ENCODE measurements at regions of chr1 and their contacts with region 1.

Region 1: DNA sequence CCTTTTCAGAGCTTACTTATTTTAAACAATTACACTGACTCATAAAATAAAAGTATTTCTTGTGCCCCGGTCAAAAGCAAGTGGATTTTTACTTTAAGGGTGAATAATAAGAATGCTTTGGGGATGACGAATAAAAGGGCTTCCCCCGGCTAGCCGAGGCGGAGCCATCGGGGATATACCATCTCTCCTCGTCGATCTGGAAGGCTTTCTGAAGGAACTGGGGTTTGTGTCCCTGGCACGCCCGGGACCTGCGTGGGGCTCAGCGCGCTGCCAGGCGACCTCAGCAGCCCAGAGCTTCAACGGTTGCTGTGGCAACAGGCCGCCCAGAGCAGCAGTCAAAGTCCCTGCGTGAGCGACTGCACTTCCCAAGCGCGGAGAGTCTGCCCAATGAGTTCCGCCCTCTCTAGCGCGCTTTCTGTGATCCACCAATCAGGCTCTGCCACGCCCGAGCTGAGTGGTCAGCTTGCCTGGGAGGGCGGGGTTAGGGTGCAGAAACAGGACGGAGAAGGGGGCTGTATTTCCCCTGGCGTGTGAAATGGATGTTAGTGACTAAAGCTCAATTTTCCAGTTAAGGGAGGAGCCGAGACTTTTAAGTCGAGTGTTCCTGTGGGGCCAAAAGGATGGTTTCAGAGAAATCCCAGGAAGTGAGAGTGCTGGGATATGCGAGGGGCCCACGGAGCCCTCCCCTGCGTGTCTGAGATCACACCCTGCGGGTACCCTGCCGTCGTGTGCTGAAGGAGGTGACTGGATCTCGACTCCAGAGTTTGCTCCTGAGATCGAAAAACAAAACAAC is 33.0 kb upstream of the MGST3 start:
- DNase-seq: peak; percentile 95
- ATAC-seq: peak; percentile 99
- H3K4me3 Mint-ChIP-seq: peak overlapping the region; percentile 90
- H3K27ac Mint-ChIP-seq: peak overlapping the region; percentile 90
- H3K4me1 Mint-ChIP-seq: peaks cover 19% of the 10 kb centered on the region
- H3K27me3 Mint-ChIP-seq: peaks cover 30% of the 10 kb centered on the region

Region 2: DNA sequence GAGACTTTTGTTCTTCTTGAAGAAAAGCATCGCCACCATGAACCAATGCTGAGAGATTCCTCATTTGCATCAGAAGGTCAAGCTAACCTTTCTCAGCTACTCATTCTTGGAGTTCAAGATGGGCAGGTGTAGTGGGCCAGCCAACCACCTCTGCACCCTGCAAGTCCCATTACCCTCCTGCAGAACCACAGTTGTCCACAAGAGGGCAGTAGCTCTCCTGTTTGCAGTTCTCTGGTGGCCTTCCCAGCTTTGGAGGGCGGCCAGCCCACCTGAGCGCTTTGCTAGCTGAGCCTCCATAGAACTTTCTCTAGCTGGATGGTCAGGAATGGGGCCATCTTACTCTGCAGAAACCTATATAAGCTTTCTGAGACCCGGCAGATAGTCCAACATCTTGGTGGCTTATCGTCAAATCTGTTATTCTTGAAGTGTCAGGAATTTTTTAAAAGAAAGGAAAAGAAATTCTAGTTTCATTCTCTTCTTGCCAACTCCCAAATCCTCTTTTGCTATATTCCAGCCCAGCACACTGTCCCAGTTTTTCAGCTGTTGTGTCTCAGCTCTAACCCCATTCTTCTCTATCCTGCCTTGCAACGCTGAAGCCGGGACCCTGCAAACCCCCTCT is 230.6 kb before region 1 on chr1:
- CTCF ChIA-PET with region 1: interaction called, 85 read pairs
- POLR2A ChIA-PET with region 1: no interaction called
- DNase-seq: peak; percentile 83
- ATAC-seq: peak; percentile 74
- H3K4me3 Mint-ChIP-seq: no peak overlapping the region
- H3K27ac Mint-ChIP-seq: no peak overlapping the region
- H3K4me1 Mint-ChIP-seq: peaks cover 2% of the 10 kb centered on the region
- H3K27me3 Mint-ChIP-seq: peaks cover 38% of the 10 kb centered on the region

Region 3: DNA sequence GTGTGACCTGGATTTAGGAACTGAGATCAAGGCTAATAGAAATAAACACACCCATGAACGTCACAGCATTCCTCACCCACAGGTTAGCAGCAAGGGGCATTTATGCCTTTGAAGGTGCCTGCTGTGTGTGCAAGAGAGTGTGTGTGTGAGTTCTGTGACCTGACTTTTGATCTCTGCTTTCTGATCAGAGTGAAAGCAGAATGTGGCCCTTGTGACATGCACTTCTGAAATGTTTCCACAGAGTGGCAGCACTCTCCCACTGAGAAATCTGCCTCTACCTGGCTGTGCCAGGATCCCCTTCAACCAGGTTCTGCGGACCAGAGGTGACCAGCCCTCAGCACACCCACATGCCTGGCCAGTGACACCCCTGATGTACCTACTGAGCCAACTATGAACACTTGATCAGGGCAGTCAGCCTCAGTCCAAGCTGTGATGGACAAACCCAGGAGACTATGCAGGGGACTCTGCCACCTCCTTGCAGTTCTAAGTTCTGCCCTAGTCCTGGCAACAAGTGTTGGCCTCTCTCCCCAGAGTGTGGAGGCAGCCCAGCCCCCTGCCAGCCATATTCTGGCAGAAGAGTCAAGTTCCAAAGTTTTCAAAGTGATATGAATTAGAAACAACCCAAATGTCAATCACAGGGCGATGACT is 194.1 kb before region 1 on chr1:
- CTCF ChIA-PET with region 1: interaction called, 32 read pairs
- POLR2A ChIA-PET with region 1: no interaction called
- DNase-seq: peak; percentile 47
- ATAC-seq: peak; percentile 47
- H3K4me3 Mint-ChIP-seq: no peak overlapping the region
- H3K27ac Mint-ChIP-seq: no peak overlapping the region
- H3K4me1 Mint-ChIP-seq: peaks cover 2% of the 10 kb centered on the region
- H3K27me3 Mint-ChIP-seq: peaks cover 25% of the 10 kb centered on the region

Region 4: DNA sequence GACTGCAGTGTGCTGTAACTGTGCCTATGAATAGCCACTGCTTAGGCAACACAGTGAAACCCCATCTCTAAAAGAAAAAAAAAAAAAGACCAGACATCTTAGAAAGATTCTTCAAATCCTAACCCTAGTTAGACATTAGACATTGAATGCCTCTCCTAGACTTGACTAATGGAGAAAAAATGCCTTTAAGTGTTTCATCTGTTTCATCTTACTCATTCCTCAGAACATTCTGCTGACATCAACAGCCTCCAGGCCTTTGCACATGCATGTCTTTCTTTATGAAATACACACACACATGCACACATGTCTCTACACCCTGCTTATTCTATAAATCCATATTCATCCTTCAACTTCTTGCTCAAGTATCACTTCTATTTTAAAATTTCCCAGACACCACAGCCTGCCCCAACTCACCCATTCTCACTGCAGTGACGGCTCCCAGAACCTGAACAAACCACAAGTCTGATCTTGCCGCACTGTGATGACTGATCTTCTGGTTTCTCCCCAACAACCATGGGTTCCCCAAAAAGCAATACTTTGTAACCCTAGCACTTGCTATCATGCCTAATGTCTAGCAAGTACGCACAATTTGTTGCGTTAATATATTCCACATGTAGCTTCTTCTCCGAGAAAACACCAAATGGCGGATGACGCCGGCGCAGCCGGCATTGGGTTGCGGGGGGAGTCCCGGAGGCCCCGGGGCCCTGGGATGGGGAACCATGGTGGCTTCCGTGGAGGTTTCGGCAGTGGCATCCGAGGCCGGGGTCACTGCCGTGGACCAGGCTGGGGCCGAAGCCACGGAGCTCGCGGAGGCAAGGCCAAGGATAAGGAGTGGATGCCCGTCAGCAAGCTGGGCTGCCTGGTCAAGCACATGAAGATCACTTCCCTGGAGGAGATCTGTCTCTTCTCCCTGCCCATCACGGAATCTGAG is 16.9 kb before region 1 on chr1:
- CTCF ChIA-PET with region 1: interaction called, 12 read pairs
- POLR2A ChIA-PET with region 1: no interaction called
- DNase-seq: no peak
- ATAC-seq: no peak
- H3K4me3 Mint-ChIP-seq: no peak overlapping the region
- H3K27ac Mint-ChIP-seq: no peak overlapping the region
- H3K4me1 Mint-ChIP-seq: no peaks in the 10 kb centered on the region
- H3K27me3 Mint-ChIP-seq: peaks cover 23% of the 10 kb centered on the region

Region 5: DNA sequence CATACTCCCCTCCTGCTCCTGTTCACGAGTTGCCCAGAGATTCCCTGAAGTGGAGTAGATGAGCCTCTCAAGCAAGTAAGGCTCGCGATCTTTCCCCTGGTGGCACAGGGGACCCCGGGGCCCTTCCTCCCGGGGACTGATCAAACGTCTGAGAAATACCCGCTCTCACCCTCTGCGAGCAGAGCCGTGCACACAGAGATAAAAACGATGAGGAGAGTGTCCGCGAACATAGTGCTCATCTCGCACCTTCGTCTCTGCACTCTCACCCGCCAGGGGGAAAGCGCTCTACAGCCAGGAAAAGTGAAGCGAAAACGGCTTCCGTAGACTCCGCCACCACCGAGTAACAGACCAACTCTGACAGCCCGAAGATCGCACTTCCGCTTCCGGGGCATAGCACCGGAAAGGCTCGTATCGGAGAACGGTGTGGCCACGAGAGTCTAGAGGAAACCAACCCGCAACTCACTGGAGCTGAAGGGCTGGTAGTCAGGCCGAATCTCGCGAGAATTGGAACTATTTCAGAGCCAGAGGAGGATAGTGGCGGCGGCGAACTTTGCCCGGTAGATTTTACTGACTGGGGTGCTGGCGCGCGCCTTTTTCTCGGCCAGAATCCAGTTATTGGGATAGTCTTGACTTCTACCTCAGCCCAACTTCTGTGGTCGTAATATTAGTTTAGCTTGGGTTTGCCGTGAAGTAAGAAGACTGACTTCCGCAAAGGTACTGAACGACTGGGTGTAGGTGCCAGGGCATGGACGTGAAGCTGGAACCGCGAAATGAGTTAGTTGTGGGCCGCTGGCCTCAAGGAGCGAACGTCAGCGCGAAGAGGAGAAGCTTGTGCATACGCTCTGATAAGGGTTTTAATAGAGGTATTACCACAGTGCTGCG is 170.7 kb after region 1 on chr1 and contains the start of gene TMCO1:
- CTCF ChIA-PET with region 1: interaction called, 5 read pairs
- POLR2A ChIA-PET with region 1: interaction called, 10 read pairs
- DNase-seq: peak; percentile 97
- ATAC-seq: peak; percentile 98
- H3K4me3 Mint-ChIP-seq: peak within 1 kb of the TSS; percentile 99
- H3K27ac Mint-ChIP-seq: peak within 1 kb of the TSS; percentile 100
- H3K4me1 Mint-ChIP-seq: peaks cover 47% of the 10 kb centered on the region
- H3K27me3 Mint-ChIP-seq: no peaks in the 10 kb centered on the region
- total RNA-seq, gene TMCO1: 89.0 to 90.1 TPM

Region 6: GRCh38 chr1:165914136-165914798 is 316.2 kb after region 1 on chr1:
- CTCF ChIA-PET with region 1: interaction called, 92 read pairs
- POLR2A ChIA-PET with region 1: interaction called, 4 read pairs
- DNase-seq: peak; percentile 80
- ATAC-seq: peak; percentile 88
- H3K4me3 Mint-ChIP-seq: no peak overlapping the region
- H3K27ac Mint-ChIP-seq: no peak overlapping the region
- H3K4me1 Mint-ChIP-seq: peaks cover 2% of the 10 kb centered on the region
- H3K27me3 Mint-ChIP-seq: no peaks in the 10 kb centered on the region